ENCODE measurements at regions of chr15 and their contacts with region 1.

Region 1: GRCh38 chr15:39756806-39757522 is 25.7 kb downstream of the FSIP1 start:
- DNase-seq: no peak
- H3K4me3 ChIP-seq: no peak overlapping the region
- H3K27ac ChIP-seq: no peak overlapping the region
- H3K4me1 ChIP-seq: no peaks in the 10 kb centered on the region
- H3K27me3 ChIP-seq: no peaks in the 10 kb centered on the region
- CTCF ChIP-seq: peak; percentile 54 to 78 (median 64)
- EP300 ChIP-seq: no peak
- POLR2A ChIP-seq: no peak

Region 2: GRCh38 chr15:38699633-38700230 is 1057.2 kb before region 1 on chr15:
- intact Hi-C with region 1: loop called in 2 of 4 experiments (anchors 10 kb)
- DNase-seq: peak in 1 of 5 donors; percentile 34
- H3K4me3 ChIP-seq: no peak overlapping the region
- H3K27ac ChIP-seq: no peak overlapping the region
- H3K4me1 ChIP-seq: no peaks in the 10 kb centered on the region
- H3K27me3 ChIP-seq: no peaks in the 10 kb centered on the region
- CTCF ChIP-seq: peak in 2 of 3 donors; percentile 28 to 33
- EP300 ChIP-seq: no peak
- POLR2A ChIP-seq: no peak

Region 3: GRCh38 chr15:38707802-38708671 is 1048.9 kb before region 1 on chr15:
- intact Hi-C with region 1: loop called (anchors 5 to 10 kb)
- DNase-seq: peak in 2 of 5 donors; percentile 22 to 42
- H3K4me3 ChIP-seq: no peak overlapping the region
- H3K27ac ChIP-seq: no peak overlapping the region
- H3K4me1 ChIP-seq: no peaks in the 10 kb centered on the region
- H3K27me3 ChIP-seq: no peaks in the 10 kb centered on the region
- CTCF ChIP-seq: peak in 2 of 3 donors; percentile 66 to 72
- EP300 ChIP-seq: no peak
- POLR2A ChIP-seq: no peak

Region 4: DNA sequence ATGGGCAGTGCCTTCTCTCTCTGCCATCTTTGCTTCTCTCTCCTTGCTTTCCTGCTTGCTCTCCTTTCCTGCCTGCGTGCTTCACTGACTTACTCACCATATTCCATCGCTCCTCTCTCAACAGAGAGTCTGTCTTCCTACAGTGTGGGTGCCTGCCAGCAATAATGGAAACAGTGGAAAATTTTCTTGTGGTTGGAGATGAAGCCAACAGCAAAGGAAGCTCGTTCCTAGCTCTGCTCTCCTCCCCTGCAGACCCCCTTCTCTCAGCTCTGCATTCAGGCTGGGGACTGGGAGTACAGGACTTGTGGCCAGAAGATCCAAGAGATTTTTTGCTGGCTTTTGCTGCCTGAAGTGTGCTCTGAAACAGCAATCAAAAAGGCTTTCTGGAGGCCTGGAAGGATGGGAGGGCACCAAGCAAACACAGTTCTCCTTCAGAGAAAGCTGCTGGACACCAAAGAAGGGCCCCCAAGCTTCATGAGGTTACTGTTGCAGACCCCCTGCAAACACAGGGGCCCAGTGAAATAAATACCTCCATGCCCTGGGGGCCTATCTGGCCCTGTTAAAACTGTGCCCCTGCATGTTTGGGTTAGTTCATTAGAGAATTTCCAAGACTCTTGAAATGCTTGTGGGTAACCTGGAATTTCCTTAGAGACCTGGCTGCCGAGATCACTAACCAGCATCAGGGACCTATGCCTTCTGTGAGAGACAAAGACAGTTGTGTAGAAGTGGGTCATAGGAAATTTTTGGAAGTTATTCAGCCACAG is 1042.5 kb before region 1 on chr15:
- intact Hi-C with region 1: loop called (anchors 5 to 10 kb)
- DNase-seq: no peak
- H3K4me3 ChIP-seq: no peak overlapping the region
- H3K27ac ChIP-seq: no peak overlapping the region
- H3K4me1 ChIP-seq: no peaks in the 10 kb centered on the region
- H3K27me3 ChIP-seq: no peaks in the 10 kb centered on the region
- CTCF ChIP-seq: no peak
- EP300 ChIP-seq: no peak
- POLR2A ChIP-seq: no peak